Right ventricle myocardium inferior (tissue), 1 donor: ENCODE measurements at regions of chr13 and their contacts with region 1.

Region 1: DNA sequence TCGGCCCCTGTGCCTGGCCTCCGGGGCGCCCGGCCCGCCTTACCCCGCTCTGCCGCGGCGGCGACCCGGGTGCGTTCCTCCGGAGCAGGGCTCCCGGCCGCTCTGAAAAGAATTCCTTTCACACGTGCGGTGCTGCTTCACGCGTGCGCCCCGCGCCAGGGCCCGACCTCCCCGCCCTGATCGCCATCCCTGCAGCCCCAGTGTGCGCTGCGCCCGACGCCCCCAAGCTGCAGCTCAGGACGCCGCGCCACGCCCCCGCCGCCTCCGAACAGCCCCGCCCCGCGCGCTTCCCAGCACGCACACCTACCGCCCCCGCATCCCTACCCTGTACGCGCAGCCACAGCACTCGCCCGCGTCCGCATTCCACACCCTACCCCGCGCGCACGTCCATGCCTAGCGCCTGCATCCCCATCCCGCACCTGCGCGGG is at the start of gene GJA3:
- DNase-seq: peak; percentile 76
- ATAC-seq: peak; percentile 88
- total RNA-seq, gene GJA3: 17.9 TPM

Region 2: DNA sequence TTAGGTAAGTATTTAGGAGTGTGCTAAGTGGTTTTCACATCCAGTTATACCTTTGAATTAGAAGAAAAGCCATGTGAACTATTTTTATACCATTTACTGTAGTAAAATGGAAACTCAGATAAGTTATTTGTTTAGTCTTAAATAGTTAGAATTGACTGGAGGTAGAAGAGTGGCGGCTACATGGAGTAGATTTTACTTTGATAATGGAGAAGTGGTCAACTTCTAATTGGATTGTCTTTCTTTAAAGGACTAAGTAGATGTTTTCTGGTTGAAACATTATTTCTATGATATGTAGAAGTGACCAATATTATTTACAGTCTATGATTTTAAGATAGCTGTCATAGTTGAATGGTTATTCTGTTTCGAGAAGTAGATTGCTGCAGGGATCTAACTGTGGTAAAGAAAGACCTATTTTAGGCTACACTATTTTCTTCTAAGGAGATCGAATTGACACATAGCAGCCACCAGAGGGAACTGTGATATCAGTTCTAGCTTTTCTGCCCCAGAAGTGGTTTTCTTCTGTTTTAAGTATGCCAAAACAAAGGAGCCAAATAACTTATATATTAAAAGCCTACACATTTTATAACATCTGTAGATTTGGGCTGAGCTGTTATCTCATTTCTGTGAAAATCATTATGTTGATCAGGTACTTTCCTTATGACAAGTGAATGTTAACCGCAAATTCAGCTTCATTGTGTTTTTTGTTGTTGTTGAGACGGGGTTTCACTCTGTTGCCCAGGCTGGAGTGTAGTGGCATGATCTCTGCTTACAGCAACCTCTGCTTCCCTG is 176.2 kb before region 1 on chr13:
- intact Hi-C with region 1: loop called (anchors 5 kb)
- DNase-seq: no peak
- ATAC-seq: no peak

Region 3: DNA sequence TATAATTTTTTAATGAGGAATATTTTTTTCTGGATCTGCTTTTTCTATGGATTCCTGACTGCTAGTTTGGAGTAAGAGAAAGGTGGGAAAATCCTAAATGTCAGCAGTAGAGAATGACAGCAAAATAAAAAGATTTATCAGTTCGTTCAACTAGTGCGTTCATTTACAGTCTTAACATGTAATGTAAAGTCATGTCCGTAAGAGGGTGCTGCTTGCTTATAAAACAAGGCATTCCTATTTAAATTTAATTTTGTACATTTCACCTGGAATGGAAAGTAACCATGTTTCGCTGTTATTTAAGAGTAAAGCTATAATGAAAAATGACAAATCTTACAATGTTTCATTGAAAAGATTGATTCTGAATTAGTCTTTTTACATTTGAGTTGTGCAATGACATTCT is 125.7 kb before region 1 on chr13:
- intact Hi-C with region 1: loop called (anchors 5 kb)
- DNase-seq: no peak
- ATAC-seq: no peak

Region 4: DNA sequence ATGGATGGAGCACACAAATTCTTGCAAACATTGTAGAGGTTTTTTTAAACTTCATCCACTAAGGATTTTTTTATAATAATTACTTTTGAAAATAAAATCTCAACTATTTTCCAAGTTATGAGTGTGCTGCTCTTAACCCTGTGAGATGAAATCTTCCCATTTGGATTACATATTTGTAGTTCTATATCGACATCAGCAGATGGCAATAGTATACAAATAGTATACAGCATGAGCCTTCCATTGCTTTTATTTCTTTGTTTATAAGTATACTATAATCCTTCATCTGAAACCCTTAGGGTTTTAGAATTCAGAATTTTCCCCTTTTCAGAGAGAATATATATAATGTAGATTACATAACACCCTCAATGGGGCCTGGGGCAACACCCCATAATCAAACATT is 70.5 kb before region 1 on chr13:
- intact Hi-C with region 1: loop called (anchors 2 kb)
- DNase-seq: no peak
- ATAC-seq: no peak

Region 5: GRCh38 chr13:20127577-20128466 is 33.0 kb before region 1 on chr13:
- intact Hi-C with region 1: loop called (anchors 2 kb)
- DNase-seq: peak; percentile 85
- ATAC-seq: peak; percentile 80

Region 6: GRCh38 chr13:20141238-20142022 is 19.4 kb before region 1 on chr13:
- intact Hi-C with region 1: loop called (anchors 1 kb)
- DNase-seq: no peak
- ATAC-seq: peak; percentile 95